GM10248 (cell line): ENCODE measurements at regions of chr7 and their contacts with region 1.

Region 1: DNA sequence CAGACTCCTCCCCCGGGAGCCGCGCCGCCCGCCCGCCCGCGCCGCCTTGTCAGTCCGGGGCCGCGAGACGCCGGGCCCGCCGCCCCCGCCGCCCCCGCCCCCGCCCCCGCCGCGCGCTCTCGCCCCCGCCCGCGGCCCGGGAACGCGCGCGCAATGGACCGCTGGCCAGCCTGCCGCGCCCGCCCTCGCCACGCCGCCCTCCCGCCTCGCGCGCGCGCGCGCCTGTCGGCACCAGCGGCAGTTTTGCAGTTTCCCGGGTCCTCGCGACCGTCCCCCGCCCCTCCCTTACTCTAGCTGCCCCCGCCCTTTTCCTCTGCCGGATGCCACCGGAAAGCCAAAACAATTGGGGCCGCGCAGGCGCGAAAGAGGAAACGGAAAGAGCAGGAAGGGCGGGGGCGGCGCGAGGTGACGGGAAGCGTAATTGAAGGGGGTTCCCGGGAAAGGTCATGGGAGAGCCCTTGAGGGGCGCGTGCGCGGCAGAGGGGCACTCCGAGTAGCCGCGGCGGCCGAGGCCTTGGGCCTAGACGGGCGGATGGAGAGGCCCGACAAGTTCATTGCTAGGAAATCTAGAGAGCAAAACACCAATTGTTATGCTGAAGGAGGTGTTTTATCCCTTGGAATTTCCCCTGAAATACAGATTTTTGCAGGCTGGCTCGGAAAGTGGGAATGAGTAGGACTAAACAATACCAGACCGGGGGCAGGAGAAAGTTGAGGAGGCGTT is 400 bp upstream of the KBTBD2 start:
- DNase-seq: peak; percentile 91
- CTCF ChIP-seq: no peak

Region 2: DNA sequence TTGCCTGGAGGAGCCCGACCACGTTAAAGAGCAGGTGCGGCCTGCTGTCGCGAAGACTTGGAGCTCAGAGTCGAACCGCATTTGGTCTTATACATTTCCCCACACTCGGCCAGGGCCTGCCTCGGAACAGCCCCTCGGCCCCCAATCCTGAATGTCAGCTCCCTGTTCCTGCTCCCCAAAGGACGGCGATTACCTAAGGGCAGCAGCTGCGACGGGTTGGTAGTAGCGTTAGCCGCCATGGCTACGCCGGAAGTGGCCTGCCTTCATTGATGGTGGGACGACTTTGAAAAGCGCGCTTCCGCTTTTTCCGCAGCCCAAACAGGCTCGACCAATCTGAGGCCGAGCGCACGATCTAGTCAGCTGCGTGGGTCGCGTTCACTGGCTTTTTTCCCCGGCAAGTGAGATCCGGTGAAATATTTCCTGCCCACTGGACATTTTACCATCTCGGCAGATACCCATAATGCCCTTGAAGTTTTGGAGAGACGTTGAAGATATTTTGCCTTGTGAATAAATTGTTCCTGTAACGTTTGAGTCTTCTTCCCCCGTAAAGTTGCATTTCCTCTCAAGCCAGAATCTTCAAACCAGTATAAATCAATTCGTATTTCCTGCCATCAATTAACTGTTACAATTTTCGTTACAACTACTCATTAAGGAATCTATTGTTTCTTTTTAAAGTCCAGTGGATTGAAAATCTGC is 401.7 kb before region 1 on chr7 and contains the start of gene LSM5:
- CTCF ChIA-PET with region 1: no interaction called
- POLR2A ChIA-PET with region 1: interaction called, 10 read pairs
- DNase-seq: peak; percentile 83
- CTCF ChIP-seq: no peak